CD4-positive, alpha-beta T cell (primary cell): ENCODE measurements at regions of chr3 and their contacts with region 1.

Region 1: GRCh38 chr3:36993326-36994283 is at the start of gene MLH1:
- DNase-seq: peak in 13 of 14 experiments; percentile 91 to 100 (median 97)
- ATAC-seq: peak; percentile 82
- H3K4me3 ChIP-seq: peak within 1 kb of the TSS; percentile 71
- H3K4me3 Mint-ChIP-seq: no peak within 1 kb of the TSS
- H3K27ac ChIP-seq: peak within 1 kb of the TSS; percentile 98 to 99
- H3K27ac Mint-ChIP-seq: no peak within 1 kb of the TSS
- H3K4me1 ChIP-seq: peaks cover 34% of the 10 kb centered on the region
- H3K4me1 Mint-ChIP-seq: peaks cover 34% of the 10 kb centered on the region
- H3K27me3 ChIP-seq: no peaks in the 10 kb centered on the region
- H3K27me3 Mint-ChIP-seq: no peaks in the 10 kb centered on the region
- CTCF ChIP-seq: no peak
- total RNA-seq, gene MLH1: 18.9 to 23.8 TPM

Region 2: DNA sequence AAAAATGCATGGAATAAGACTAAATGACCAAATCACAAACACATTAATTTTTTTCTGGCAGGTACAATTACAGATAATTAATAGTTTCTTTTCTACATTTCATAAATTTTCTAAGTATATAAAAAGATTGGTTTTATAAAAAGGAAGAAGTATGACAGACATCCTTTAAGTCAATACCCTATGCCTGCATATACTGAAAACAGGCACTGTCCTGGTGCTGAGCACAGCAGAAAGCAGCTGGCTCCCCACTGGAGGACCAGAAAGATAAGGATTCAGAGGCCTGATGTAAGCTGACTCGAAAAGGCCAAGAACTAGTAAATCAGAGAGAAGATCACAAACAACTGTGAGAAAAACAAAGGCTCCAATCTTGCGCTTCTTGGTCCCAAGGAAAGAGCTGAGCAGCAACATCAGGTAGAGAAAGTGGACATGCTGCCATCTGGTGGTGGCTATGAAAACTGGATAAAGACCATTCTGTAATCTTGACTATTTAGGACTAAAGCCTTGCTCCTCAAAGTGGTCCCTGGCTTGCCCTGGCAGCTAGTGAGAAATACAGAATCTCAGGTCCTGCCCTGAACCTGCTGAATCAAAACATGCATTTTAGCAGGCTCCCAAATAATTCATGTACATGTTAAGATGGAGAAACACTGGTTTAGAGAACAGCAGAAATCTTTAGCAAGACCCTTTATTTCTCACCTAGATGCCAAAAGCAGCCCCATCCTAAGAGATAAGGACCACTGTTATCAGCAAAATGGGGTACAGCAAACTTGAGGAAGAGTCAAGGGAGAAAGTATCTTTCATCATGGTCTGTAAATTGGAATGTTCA is 124.8 kb before region 1 on chr3:
- CTCF ChIA-PET with region 1: interaction called, 12 read pairs
- POLR2A ChIA-PET with region 1: interaction called, 3 read pairs
- intact Hi-C with region 1: no loop called
- DNase-seq: peak in 13 of 14 experiments; percentile 10 to 83 (median 27)
- ATAC-seq: peak; percentile 85
- H3K4me3 ChIP-seq: no peak overlapping the region
- H3K4me3 Mint-ChIP-seq: no peak overlapping the region
- H3K27ac ChIP-seq: no peak overlapping the region
- H3K27ac Mint-ChIP-seq: peak overlapping the region; percentile 12
- H3K4me1 ChIP-seq: peaks cover 18% of the 10 kb centered on the region
- H3K4me1 Mint-ChIP-seq: peaks cover 42% of the 10 kb centered on the region
- H3K27me3 ChIP-seq: no peaks in the 10 kb centered on the region
- H3K27me3 Mint-ChIP-seq: no peaks in the 10 kb centered on the region
- CTCF ChIP-seq: peak; percentile 68

Region 3: DNA sequence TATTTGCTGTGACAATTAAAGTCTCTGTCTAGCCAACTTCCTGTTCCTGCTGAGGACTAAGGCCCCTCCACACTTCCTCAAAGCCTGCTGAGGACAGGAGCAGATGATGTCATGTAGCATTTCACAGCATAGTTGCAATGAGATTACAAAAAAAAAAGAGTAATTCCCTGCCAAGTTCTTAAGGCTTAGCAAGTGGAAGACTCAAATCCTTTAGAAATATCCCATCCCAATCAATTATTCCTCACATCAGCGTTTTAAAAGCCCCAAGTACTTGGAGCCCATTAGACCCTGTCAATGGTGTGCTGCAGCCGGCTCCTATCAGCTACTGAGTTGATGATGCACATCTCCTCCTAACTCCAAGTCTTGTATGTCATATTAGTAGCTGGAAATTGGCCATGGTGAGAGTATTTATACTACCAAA is 100.5 kb before region 1 on chr3:
- CTCF ChIA-PET with region 1: no interaction called
- POLR2A ChIA-PET with region 1: interaction called, 16 read pairs
- intact Hi-C with region 1: no loop called
- DNase-seq: peak in 11 of 14 experiments; percentile 28 to 85 (median 37)
- ATAC-seq: peak; percentile 99
- H3K4me3 ChIP-seq: no peak overlapping the region
- H3K4me3 Mint-ChIP-seq: peak overlapping the region; percentile 68
- H3K27ac ChIP-seq: peak overlapping the region; percentile 0 to 65
- H3K27ac Mint-ChIP-seq: peak overlapping the region; percentile 99
- H3K4me1 ChIP-seq: peaks cover 40% of the 10 kb centered on the region
- H3K4me1 Mint-ChIP-seq: peaks cover 72% of the 10 kb centered on the region
- H3K27me3 ChIP-seq: no peaks in the 10 kb centered on the region
- H3K27me3 Mint-ChIP-seq: no peaks in the 10 kb centered on the region
- CTCF ChIP-seq: no peak

Region 4: GRCh38 chr3:36911990-36912804 is 81.4 kb before region 1 on chr3:
- CTCF ChIA-PET with region 1: interaction called, 4 read pairs
- POLR2A ChIA-PET with region 1: interaction called, 11 read pairs
- intact Hi-C with region 1: loop called (anchors 2 kb)
- DNase-seq: peak in 8 of 14 experiments; percentile 14 to 80 (median 41)
- ATAC-seq: peak; percentile 82
- H3K4me3 ChIP-seq: peak overlapping the region; percentile 41
- H3K4me3 Mint-ChIP-seq: peak overlapping the region; percentile 40
- H3K27ac ChIP-seq: peak overlapping the region; percentile 42 to 67
- H3K27ac Mint-ChIP-seq: peak overlapping the region; percentile 73
- H3K4me1 ChIP-seq: peaks cover 29% of the 10 kb centered on the region
- H3K4me1 Mint-ChIP-seq: peaks cover 39% of the 10 kb centered on the region
- H3K27me3 ChIP-seq: no peaks in the 10 kb centered on the region
- H3K27me3 Mint-ChIP-seq: no peaks in the 10 kb centered on the region
- CTCF ChIP-seq: no peak

Region 5: DNA sequence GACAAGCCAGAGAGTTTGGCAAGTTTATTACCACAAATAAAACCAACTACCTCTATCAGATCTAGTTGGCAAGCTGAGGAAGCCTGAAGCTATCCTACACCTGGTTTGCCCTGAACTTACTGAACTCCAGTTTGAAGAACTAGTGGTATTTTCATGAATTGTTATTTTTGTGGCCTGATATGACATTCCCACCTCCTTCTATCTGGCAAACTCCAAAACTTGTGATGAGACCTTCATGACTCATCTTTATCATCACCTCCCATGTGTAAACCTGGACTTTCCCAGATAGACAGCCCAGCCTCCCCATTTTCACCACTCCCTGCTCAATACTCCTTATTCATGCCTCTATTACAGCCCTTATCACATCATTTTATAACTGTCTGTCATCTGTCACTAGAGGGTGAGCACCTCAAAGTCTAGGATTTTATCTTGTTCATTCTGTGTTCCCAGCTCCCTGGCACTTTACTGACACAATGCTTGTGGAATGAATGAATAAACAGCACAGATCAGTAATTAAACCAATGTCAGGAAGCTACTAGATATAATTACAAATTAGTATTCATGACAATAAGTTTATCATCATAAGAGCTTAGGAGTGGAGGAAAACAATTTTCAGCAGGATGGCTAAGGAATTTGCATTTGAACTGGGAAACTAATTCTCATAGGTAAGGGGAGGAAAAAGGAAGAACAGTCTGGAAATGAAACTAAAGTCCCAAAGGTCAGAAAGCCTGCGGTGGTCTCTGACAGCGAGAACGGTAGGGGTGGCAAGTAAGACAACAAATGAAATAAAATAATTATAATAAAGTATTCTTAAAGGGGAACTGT is 35.5 kb before region 1 on chr3:
- CTCF ChIA-PET with region 1: interaction called, 20 read pairs
- POLR2A ChIA-PET with region 1: interaction called, 24 read pairs
- intact Hi-C with region 1: no loop called
- DNase-seq: peak in 2 of 14 experiments; percentile 57 to 66
- ATAC-seq: no peak
- H3K4me3 ChIP-seq: no peak overlapping the region
- H3K4me3 Mint-ChIP-seq: no peak overlapping the region
- H3K27ac ChIP-seq: no peak overlapping the region
- H3K27ac Mint-ChIP-seq: peak overlapping the region; percentile 10
- H3K4me1 ChIP-seq: peaks cover 5% of the 10 kb centered on the region
- H3K4me1 Mint-ChIP-seq: peaks cover 5% of the 10 kb centered on the region
- H3K27me3 ChIP-seq: no peaks in the 10 kb centered on the region
- H3K27me3 Mint-ChIP-seq: no peaks in the 10 kb centered on the region
- CTCF ChIP-seq: no peak

Region 6: DNA sequence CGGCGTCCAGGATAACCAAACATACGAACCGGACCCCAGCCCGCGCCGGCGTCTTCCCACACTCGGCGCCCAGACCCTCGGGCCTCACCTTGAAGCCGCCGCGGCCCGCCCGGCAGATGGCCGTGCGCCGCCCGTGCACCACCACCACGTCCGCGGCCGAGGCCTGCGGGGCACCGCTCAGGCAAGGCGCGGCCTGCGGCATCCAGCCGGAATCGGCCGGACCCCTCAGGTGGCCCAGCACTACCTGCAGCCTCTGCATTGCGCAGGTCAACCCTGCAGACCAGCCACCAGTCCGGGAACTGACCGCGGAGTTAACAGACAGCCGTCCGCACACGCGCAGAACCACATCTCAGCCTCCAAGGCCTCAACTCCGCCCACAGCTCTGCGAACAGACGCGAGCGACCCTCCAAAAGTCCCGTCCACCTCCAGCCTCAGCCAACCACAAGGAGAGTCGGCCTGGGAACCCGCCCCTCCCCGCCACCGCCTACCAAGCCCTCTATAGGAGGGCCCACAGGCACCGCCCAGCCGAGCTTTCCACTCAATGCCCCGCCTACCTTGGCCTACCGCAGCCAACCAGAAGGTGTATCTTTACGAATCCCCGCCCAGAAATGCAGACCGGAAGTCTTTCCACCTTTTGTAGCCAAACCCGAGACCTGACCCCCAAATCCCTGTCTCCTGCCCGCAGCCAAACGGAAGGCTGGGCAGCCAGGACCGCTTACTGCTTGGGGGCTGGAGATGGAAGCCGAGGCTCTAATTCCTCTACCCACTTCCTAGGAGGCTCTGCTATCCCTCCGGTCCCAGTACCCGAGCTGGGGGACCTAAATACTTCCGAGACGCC is 1143.4 kb after region 1 on chr3 and contains the start of gene ACAA1:
- CTCF ChIA-PET with region 1: no interaction called
- POLR2A ChIA-PET with region 1: no interaction called
- intact Hi-C with region 1: loop called in 1 of 2 experiments (anchors 10 kb)
- DNase-seq: peak; percentile 91 to 99 (median 96)
- ATAC-seq: peak; percentile 84
- H3K4me3 ChIP-seq: peak within 1 kb of the TSS; percentile 95
- H3K4me3 Mint-ChIP-seq: peak within 1 kb of the TSS; percentile 99
- H3K27ac ChIP-seq: peak within 1 kb of the TSS; percentile 80 to 83
- H3K27ac Mint-ChIP-seq: peak within 1 kb of the TSS; percentile 92
- H3K4me1 ChIP-seq: peaks cover 76% of the 10 kb centered on the region
- H3K4me1 Mint-ChIP-seq: peaks cover 77% of the 10 kb centered on the region
- H3K27me3 ChIP-seq: no peaks in the 10 kb centered on the region
- H3K27me3 Mint-ChIP-seq: no peaks in the 10 kb centered on the region
- CTCF ChIP-seq: no peak
- total RNA-seq, gene ACAA1: 56.4 to 58.9 TPM